ENCODE measurements at regions of chr1 and their contacts with region 1.

Region 1: DNA sequence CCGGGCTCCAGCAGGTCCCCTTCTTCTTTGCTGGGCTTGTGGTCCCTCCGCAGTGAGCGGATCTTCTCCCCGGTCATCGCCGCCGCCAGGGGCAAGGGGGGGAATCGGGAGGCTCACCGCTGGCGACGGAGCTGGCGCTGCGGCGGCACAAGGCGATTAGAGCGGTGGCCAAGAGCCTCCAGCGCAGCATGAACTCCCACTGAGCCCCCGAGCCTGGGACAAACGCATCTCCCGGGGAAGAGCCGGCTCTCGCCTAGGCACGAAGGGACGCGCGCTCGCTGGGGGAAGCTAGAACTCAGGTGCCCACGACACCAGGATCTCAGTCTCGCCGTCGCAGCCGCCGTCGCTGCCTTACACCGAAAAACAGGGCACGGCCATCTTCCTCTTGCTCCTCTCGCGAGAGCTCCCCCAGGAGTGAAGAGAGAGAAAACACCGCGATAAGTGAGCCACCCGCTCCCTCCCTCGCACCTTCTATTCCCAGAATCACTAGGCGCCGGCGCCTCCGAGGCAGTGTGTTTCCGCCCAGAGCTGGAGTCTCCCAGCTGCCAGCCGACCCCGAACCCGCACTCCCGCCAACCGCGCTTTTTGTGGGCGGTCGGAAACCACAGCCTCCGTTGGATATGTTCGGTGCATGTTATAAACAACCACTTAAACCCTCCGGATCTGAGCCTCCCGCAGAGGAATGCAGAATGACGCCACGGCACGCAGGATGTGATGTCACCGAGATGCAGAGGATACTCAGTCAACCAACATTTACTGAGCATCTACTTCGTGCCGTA is at the start of gene ANKRD13C:
- DNase-seq: peak; percentile 97 to 98 (median 98)
- H3K4me3 ChIP-seq: peak within 1 kb of the TSS; percentile 87 to 99 (median 96)
- H3K27ac ChIP-seq: peak within 1 kb of the TSS; percentile 94 to 98
- H3K4me1 ChIP-seq: peaks cover 11 to 22% (median 16%) of the 10 kb centered on the region in 4 experiments
- H3K27me3 ChIP-seq: no peaks in the 10 kb centered on the region

Region 2: GRCh38 chr1:70311369-70311768 is 43.2 kb before region 1 on chr1:
- CTCF ChIA-PET with region 1: no interaction called
- POLR2A ChIA-PET with region 1: no interaction called
- DNase-seq: no peak
- H3K4me3 ChIP-seq: no peak overlapping the region
- H3K27ac ChIP-seq: no peak overlapping the region
- H3K4me1 ChIP-seq: no peaks in the 10 kb centered on the region
- H3K27me3 ChIP-seq: no peaks in the 10 kb centered on the region

Region 3: DNA sequence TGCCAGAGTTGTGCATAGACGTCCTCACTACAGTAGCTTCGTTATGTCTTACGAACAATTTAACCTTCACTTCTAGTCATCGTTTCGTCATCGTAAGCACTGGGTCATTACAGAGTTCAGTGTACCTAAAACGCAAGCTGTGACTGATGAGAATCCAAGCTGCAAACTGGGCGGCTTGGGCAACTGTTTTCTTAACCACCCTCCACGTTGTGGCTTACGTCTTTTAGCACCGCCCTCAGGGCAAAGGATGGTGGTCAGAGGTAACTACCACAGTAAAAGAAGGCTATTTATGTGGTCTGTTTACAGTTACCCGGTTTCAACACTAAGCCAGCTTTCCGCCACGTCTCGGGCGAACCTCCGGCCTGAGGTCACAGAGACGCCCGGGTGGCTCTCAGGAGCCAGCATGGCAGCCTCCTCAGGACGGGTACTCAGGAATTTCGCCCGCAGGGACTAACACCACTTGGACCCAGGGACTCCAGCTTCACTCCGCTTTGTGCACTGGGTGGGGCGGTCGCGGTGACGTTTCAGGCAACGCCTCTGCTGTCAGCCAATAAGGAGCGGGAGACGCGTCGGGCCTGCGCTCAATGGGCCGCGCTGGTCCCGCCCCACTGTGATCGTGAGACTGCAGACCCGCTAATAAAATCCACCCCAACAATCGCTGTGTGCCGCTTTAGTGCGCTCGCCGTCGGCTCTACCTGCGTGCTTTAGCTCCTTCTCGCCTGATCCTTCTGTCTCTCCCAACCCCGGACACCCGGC is 56.3 kb after region 1 on chr1 and contains the start of gene CTH:
- CTCF ChIA-PET with region 1: interaction called, 3 read pairs
- POLR2A ChIA-PET with region 1: interaction called, 12 read pairs
- DNase-seq: peak; percentile 94 to 98 (median 97)
- H3K4me3 ChIP-seq: peak within 1 kb of the TSS; percentile 65 to 97 (median 88)
- H3K27ac ChIP-seq: peak within 1 kb of the TSS; percentile 90 to 92
- H3K4me1 ChIP-seq: peaks cover 11 to 17% (median 12%) of the 10 kb centered on the region in 4 experiments
- H3K27me3 ChIP-seq: no peaks in the 10 kb centered on the region